Gastrocnemius medialis (tissue), 4 donors: ENCODE measurements at regions of chr1 and their contacts with region 1.

Region 1: DNA sequence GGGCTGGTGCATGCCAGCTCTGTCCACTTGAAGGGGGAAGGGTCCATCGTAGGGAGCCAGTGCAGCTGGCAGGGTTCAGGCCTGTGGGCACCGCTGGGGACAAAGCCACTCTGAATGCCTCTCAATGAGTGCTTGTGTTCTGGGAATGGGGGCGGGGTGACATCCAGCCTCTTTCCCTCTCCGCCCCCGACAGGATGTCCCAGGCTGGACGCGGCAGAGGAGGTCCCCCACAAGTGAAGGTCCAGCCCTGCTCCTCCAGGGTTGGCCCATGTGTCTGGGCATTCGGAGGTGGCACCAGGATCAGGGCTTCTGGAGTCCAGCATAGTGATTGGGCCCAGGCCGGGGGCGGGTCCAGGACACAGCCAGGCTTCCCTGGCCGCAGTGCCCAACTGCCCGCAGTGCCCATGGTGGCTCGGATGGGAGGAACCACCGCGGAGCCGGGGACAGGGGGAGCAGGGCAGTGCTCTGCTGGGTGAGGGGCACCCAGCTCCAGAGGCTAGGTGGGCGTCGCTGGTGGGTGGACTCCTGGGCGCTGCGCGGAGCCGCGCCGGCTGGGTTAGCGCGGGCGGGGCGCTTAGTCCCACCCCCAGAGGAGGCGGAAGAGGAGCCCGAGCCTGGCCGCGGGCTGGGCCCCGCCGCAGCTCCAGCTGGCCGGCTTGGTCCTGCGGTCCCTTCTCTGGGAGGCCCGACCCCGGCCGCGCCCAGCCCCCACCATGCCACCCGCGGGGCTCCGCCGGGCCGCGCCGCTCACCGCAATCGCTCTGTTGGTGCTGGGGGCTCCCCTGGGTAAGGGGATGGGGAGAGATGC is at the start of gene SHISA4:
- DNase-seq: peak; percentile 81 to 94
- ATAC-seq: peak; percentile 45 to 55
- H3K4me3 ChIP-seq: peak within 1 kb of the TSS; percentile 65 to 89 (median 72)
- H3K27ac ChIP-seq: peak within 1 kb of the TSS; percentile 90 to 98 (median 94)
- H3K4me1 ChIP-seq: peaks cover 82 to 85% of the 10 kb centered on the region in 2 donors
- H3K27me3 ChIP-seq: no peaks in the 10 kb centered on the region
- CTCF ChIP-seq: no peak
- POLR2A ChIP-seq: peak; percentile 95 to 97
- total RNA-seq, gene SHISA4: 76.6 to 384 (median 229) TPM

Region 2: DNA sequence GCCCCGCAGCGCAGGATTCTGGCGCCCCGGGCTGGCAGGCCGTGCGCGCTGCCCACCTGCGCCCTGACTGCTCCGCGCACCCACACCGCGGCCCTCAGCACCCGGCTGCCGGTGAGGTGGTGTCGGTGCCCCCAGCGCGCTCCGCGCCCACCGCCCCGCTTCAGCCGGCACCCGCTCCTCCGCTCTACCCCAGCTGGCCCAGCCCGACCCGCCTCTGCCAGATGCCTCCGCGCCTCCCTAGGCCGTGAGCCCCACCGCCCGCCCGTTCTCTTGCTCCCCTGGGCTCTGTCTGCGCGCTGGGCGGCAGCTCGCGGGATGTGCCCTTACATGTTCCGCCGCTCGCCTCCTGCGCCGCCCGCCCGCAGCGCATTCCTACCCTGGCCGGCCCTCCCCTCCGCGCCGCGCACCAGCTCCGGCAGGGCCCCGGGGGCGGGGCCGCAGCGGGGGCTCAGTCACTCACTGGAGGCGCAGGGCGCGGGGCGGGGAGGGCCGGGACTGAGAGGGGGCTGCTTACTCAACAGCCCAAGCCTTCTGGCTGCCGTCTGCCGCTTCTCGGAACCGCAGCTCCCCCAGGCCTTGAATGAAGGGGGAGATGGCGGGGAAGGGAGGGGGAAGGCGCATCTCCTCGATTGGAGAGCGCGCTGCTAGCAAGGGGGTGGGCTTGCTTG is 419.5 kb before region 1 on chr1 and contains the start of gene PHLDA3:
- in situ Hi-C with region 1: no loop called
- intact Hi-C with region 1: loop called (anchors 10 kb)
- DNase-seq: peak; percentile 65 to 85
- ATAC-seq: peak; percentile 69 to 72
- H3K4me3 ChIP-seq: peak within 1 kb of the TSS; percentile 58 to 77 (median 74)
- H3K27ac ChIP-seq: peak within 1 kb of the TSS; percentile 92 to 100 (median 100)
- H3K4me1 ChIP-seq: peaks cover 26 to 42% of the 10 kb centered on the region in 2 donors
- H3K27me3 ChIP-seq: no peaks in the 10 kb centered on the region
- CTCF ChIP-seq: peak in 3 of 5 experiments; percentile 13 to 20 (median 13)
- POLR2A ChIP-seq: peak; percentile 86 to 89
- total RNA-seq, gene PHLDA3: 7.4 to 91.8 (median 62.7) TPM

Region 3: DNA sequence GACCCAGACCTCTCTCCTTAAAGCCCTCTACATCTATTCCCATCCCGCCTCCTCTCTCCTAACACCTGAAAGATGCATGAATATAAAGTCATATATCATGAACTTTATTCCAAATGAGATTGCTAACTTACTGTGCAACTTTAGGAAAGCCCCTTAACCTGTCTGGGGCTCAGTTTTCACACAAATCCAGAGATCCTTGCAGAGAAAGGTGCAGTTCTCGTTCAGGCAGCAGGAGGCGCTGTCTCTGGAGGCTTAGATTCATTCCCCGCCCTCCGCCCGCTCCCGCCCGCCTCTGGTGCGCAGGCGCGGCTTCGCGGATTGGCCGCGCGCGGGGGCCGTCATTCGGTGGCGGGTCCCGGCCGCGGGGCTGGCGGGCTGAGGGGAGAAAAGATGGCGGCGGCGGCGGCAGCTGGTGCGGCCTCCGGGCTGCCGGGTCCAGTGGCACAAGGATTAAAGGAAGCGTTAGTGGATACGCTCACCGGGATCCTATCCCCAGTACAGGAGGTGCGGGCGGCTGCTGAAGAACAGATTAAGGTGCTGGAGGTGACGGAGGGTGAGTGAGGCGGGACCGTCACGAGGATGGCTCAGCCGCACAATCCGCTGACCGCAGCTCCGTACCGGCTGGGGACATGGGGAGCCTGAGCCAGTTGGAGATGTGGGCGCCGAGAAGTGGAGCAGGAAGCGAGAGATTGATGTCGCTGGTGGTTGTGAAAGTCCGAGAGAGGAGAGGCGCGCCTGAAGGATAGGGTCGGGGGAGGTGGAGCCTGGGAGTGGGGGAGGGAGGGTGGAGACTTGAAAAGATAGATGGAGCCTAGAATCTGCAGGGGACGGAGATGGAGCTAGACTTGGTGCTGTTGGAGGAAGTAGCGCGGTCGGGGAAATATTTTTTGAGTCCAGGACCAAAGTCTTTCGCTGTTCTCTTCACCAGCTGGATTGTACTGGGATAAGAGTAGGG is 59.4 kb before region 1 on chr1 and contains the start of gene IPO9:
- in situ Hi-C with region 1: no loop called
- intact Hi-C with region 1: loop called (anchors 5 kb)
- DNase-seq: peak; percentile 82 to 92
- ATAC-seq: peak; percentile 92 to 94
- H3K4me3 ChIP-seq: peak within 1 kb of the TSS; percentile 66 to 100 (median 97)
- H3K27ac ChIP-seq: peak within 1 kb of the TSS; percentile 85 to 99 (median 96)
- H3K4me1 ChIP-seq: peaks cover 32 to 55% of the 10 kb centered on the region in 2 donors
- H3K27me3 ChIP-seq: no peaks in the 10 kb centered on the region
- CTCF ChIP-seq: peak; percentile 93 to 98 (median 97)
- POLR2A ChIP-seq: peak; percentile 78
- total RNA-seq, gene IPO9: 7.2 to 16.3 (median 10.3) TPM

Region 4: DNA sequence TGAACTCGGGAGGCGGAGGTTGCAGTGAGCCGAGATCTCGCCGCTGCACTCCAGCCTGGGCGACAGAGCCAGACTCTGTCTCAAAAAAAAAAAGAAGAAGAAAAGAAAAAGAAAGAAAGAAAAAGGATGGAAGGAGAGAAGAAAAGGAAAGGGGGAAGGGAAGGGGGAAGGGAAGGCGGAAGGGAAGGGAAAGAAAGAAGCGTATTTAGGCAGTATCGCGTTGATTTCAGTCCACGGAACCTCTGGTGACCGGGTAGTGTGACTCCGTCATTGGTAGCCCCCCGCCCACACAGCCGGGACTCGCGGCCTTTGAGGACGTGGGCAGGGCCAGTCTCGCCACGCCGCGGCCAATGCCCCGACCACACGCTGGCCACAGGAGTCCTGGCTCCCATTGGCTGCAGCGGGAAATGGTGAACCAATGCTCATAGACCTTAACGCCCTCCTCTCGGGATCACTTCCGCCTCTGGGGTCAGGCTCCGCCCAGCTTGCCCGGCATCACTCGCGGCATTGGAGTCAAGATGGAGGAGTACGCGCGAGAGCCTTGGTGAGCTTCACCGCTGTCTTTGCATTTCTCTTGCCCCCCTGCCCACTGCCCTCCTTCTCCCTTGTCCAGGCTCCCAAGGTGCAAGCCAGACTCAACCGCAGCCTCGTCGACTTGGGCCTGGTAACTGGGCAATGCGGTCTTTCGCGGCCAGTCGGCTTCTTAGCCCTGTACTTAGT is 66.7 kb after region 1 on chr1 and contains the start of gene TIMM17A:
- in situ Hi-C with region 1: no loop called
- intact Hi-C with region 1: loop called (anchors 2 kb)
- DNase-seq: peak; percentile 96 to 97
- ATAC-seq: peak; percentile 99 to 100
- H3K4me3 ChIP-seq: peak within 1 kb of the TSS; percentile 81 to 93 (median 86)
- H3K27ac ChIP-seq: peak within 1 kb of the TSS; percentile 84 to 91 (median 87)
- H3K4me1 ChIP-seq: peaks cover 9 to 17% of the 10 kb centered on the region in 2 donors
- H3K27me3 ChIP-seq: no peaks in the 10 kb centered on the region
- CTCF ChIP-seq: no peak
- POLR2A ChIP-seq: peak; percentile 86 to 93
- total RNA-seq, gene TIMM17A: 33.6 to 67.6 (median 43.3) TPM

Region 5: GRCh38 chr1:201970334-201971159 is 82.1 kb after region 1 on chr1:
- in situ Hi-C with region 1: loop called in 1 of 4 experiments (anchors 5 kb)
- intact Hi-C with region 1: no loop called
- DNase-seq: no peak
- ATAC-seq: no peak
- H3K4me3 ChIP-seq: no peak overlapping the region
- H3K27ac ChIP-seq: no peak overlapping the region
- H3K4me1 ChIP-seq: peaks cover 7% of the 10 kb centered on the region in 2 donors
- H3K27me3 ChIP-seq: no peaks in the 10 kb centered on the region
- CTCF ChIP-seq: no peak
- POLR2A ChIP-seq: no peak

Region 6: GRCh38 chr1:202076050-202076511 is 187.6 kb after region 1 on chr1:
- in situ Hi-C with region 1: no loop called
- intact Hi-C with region 1: no loop called
- DNase-seq: no peak
- ATAC-seq: no peak
- H3K4me3 ChIP-seq: no peak overlapping the region
- H3K27ac ChIP-seq: no peak overlapping the region
- H3K4me1 ChIP-seq: no peaks in the 10 kb centered on the region
- H3K27me3 ChIP-seq: no peaks in the 10 kb centered on the region
- CTCF ChIP-seq: no peak
- POLR2A ChIP-seq: no peak

Region 7: GRCh38 chr1:202135221-202135721 is 246.8 kb after region 1 on chr1:
- in situ Hi-C with region 1: loop called in 3 of 4 experiments (anchors 25 kb)
- intact Hi-C with region 1: loop called (anchors 10 kb)
- DNase-seq: peak in 1 of 2 donors; percentile 40
- ATAC-seq: peak; percentile 74 to 78
- H3K4me3 ChIP-seq: no peak overlapping the region
- H3K27ac ChIP-seq: no peak overlapping the region
- H3K4me1 ChIP-seq: peaks cover 5 to 14% of the 10 kb centered on the region in 2 donors
- H3K27me3 ChIP-seq: no peaks in the 10 kb centered on the region
- CTCF ChIP-seq: peak; percentile 49 to 93 (median 74)
- POLR2A ChIP-seq: no peak